ENCODE measurements at regions of chr10 and their contacts with region 1.

Region 1: DNA sequence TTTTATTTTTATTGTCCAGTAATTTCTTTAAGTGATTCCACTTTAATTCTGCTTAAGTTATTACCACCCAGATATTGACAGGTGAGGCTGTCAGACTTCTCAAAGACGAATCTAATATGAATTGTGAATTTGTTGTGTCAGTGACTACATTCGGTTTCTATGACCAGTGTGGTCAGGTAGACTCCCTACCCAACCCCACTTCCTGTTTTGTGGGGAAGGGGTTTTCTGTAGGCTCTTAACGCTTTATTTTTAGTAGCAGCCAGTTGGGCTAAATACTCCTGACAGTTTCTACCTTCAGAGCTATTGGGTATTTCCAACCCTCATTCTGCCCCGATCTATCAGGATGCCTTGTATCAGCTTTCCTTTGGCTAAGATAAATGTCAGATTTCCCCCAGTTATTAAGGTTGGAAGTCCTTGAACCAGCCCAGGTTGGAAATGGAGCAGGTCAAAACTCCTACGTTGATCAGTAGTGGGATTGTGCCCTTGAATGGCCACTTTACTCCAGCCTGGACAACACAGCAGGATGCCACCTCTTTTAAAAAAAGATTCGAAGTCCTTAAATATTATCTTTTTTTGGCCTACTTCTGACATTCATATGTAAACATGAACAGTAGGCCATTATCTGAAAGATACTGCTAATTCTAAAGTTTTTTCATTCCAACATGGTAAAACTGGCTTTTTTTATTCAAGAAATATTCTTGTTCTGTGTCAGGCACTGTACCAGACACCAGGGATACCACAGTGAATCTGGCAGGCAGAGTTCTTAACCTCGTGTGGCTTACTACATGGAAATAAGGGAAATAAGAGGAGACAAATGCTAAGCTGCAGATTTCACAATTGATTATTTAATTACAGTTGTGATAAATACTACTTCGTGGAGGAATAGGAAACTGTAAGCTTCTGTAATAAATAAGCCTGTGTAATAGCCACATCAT is 133.3 kb upstream of the SAMD8 start:
- DNase-seq: peak; percentile 84
- H3K4me3 Mint-ChIP-seq: peak overlapping the region; percentile 9
- H3K27ac Mint-ChIP-seq: peak overlapping the region; percentile 72
- H3K4me1 Mint-ChIP-seq: peaks cover 36% of the 10 kb centered on the region
- H3K27me3 Mint-ChIP-seq: no peaks in the 10 kb centered on the region

Region 2: GRCh38 chr10:74854610-74855009 is 123.6 kb before region 1 on chr10:
- CTCF ChIA-PET with region 1: no interaction called
- intact Hi-C with region 1: loop called (anchors 1 kb)
- DNase-seq: no peak
- H3K4me3 Mint-ChIP-seq: peak overlapping the region; percentile 25
- H3K27ac Mint-ChIP-seq: peak overlapping the region; percentile 38
- H3K4me1 Mint-ChIP-seq: peaks cover 40% of the 10 kb centered on the region
- H3K27me3 Mint-ChIP-seq: no peaks in the 10 kb centered on the region

Region 3: GRCh38 chr10:74936577-74937501 is 41.3 kb before region 1 on chr10:
- CTCF ChIA-PET with region 1: no interaction called
- intact Hi-C with region 1: no loop called
- DNase-seq: no peak
- H3K4me3 Mint-ChIP-seq: no peak overlapping the region
- H3K27ac Mint-ChIP-seq: no peak overlapping the region
- H3K4me1 Mint-ChIP-seq: peaks cover 24% of the 10 kb centered on the region
- H3K27me3 Mint-ChIP-seq: no peaks in the 10 kb centered on the region

Region 4: GRCh38 chr10:74967911-74968645 is 10.1 kb before region 1 on chr10:
- CTCF ChIA-PET with region 1: interaction called, 10 read pairs
- intact Hi-C with region 1: loop called (anchors 1 kb)
- DNase-seq: no peak
- H3K4me3 Mint-ChIP-seq: peak overlapping the region; percentile 55
- H3K27ac Mint-ChIP-seq: peak overlapping the region; percentile 81
- H3K4me1 Mint-ChIP-seq: peaks cover 40% of the 10 kb centered on the region
- H3K27me3 Mint-ChIP-seq: no peaks in the 10 kb centered on the region

Region 5: DNA sequence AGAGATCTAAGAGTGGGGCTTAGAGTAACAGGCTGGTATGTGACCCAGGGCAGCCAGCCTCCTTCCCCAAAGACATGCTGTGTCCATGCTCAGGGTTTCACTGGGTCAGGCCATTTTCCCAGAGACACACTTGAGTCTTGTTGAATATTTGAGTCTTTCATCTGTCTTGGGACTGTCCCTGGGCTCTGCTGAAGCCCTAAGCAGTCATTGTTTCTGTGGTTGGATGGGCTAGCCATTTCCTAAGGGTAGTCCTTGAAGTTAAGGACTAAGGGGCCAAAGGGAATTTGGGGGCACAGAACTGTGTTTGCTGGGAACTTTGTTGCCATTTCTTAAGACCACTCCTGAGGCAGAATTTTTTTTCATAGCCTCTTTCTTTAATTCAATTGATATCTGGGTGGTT is 34.8 kb after region 1 on chr10:
- CTCF ChIA-PET with region 1: interaction called, 7 read pairs
- intact Hi-C with region 1: loop called (anchors 1 kb)
- DNase-seq: no peak
- H3K4me3 Mint-ChIP-seq: no peak overlapping the region
- H3K27ac Mint-ChIP-seq: peak overlapping the region; percentile 79
- H3K4me1 Mint-ChIP-seq: peaks cover 37% of the 10 kb centered on the region
- H3K27me3 Mint-ChIP-seq: no peaks in the 10 kb centered on the region